T-cell (primary cell): ENCODE measurements at regions of chr21 and their contacts with region 1.

Region 1: DNA sequence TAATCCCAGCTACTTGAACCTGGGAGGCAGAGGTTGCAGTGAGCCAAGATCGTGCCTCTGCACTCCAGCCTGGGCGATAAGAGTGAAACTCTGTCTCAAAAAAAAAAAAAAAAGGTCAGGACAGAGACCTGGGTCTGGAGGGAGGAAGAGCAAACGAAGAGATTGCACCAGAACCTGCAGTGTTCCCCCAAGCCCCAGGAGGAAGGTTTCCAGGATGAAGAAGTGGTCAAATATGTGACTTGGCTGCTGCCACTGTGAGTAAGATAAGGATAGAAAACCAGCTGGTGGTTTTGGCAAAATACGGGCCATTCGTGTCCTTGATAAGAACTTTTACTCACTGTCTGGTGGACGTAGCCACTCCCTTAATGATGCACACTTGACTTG is 42.2 kb downstream of the CLDN14 start:
- DNase-seq: no peak
- ATAC-seq: no peak
- H3K4me3 ChIP-seq: no peak overlapping the region
- H3K4me3 Mint-ChIP-seq: no peak overlapping the region
- H3K27ac ChIP-seq: no peak overlapping the region
- H3K27ac Mint-ChIP-seq: no peak overlapping the region
- H3K4me1 ChIP-seq: no peaks in the 10 kb centered on the region
- H3K4me1 Mint-ChIP-seq: no peaks in the 10 kb centered on the region
- H3K27me3 ChIP-seq: peaks cover 0 to 16% of the 10 kb centered on the region in 2 experiments
- H3K27me3 Mint-ChIP-seq: peaks cover 15 to 18% of the 10 kb centered on the region in 2 donors

Region 2: DNA sequence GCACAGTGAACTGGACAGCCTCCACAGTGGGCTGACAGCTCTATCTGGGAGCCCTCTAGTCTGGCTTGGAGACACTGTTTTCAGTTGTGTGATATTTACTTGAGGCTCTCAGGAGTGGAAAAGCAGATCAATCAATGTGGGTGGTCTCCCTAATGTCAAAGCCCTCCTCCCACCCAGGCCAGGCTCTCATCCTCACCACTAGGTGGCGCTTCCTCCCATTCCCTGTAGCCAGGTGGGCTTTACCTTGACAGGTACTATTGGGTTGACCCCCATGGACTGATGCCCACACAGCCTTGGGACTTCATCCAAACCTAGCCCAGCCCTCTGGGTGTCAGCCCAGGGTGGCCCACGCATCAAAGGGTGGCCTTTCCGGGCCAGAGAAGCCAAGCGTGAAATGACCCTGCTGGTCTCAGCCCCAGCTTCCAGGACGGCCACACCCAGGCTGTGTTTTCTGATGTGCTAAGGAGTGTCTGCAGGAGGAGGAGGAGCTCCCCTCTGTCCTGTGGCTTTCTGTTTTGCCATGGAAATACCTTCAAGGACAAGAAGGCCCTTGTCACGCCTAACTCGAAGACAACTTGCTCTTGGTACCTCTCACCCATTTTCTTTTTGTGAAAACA is 1714.9 kb before region 1 on chr21:
- CTCF ChIA-PET with region 1: interaction called in 1 of 2 experiments, 11 read pairs
- POLR2A ChIA-PET with region 1: no interaction called
- DNase-seq: peak in 17 of 35 experiments; percentile 5 to 54 (median 18)
- ATAC-seq: no peak
- H3K4me3 ChIP-seq: no peak overlapping the region
- H3K4me3 Mint-ChIP-seq: no peak overlapping the region
- H3K27ac ChIP-seq: no peak overlapping the region
- H3K27ac Mint-ChIP-seq: no peak overlapping the region
- H3K4me1 ChIP-seq: no peaks in the 10 kb centered on the region
- H3K4me1 Mint-ChIP-seq: no peaks in the 10 kb centered on the region
- H3K27me3 ChIP-seq: peaks cover 0 to 21% of the 10 kb centered on the region in 2 experiments
- H3K27me3 Mint-ChIP-seq: peaks cover 4 to 11% of the 10 kb centered on the region in 2 donors